PC-3 (cell line): ENCODE measurements at regions of chr17 and their contacts with region 1.

Region 1: GRCh38 chr17:79045842-79046196 is 21.9 kb downstream of the C1QTNF1 start:
- DNase-seq: peak; percentile 83
- ATAC-seq: peak; percentile 70
- H3K4me3 ChIP-seq: no peak overlapping the region
- H3K27ac ChIP-seq: no peak overlapping the region
- H3K4me1 ChIP-seq: peaks cover 5% of the 10 kb centered on the region; the same call in 1 of the 2 replicates
- H3K27me3 ChIP-seq: no peaks in the 10 kb centered on the region
- CTCF ChIP-seq: peak; percentile 97

Region 2: DNA sequence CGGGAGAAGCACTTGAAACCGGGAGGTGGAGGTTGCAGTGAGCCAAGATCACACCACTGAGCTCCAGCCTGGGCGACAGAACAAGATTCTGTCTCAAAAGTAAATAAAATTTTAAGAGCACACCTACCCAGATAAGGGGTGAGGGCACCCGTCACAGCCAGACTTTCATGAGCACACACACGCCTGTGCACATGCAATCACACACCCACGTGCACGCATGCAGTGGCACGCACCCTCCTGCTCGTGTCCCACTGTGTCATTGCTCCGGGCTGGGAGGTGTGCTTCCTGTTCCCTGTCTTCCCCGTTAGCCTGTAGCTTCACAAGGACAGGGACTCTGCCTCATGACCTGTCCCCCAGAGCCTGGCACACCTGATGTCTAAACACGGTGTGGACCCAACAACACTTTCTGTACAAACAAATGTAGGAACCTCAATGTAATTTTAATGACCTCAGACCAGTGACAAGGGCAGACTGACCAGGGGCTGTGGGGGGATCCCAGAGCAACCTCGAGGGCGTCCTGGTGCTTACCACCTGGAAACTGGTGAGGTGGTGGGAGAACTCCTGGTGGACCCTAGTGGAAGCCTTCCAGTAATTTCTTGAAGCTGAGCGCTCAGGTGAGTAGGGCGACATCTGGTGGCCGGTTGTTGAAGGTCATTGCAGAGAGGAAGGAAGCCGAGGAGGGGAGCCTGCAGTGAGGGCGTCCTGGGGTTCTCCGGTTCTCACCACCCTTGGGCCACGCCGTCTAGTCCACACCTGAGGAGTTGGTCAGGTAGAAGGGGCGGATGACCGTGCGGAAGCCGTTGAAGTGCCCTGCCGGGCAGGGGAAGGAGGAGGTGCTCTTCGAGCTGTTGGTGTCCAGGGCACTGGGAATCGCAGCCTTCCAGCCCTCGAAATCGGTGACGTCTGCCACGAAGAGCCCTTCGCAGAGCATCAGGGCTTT is 74.7 kb before region 1 on chr17:
- CTCF ChIA-PET with region 1: no interaction called
- POLR2A ChIA-PET with region 1: no interaction called
- intact Hi-C with region 1: no loop called
- DNase-seq: peak; percentile 91
- ATAC-seq: peak; percentile 61
- H3K4me3 ChIP-seq: no peak overlapping the region
- H3K27ac ChIP-seq: no peak overlapping the region
- H3K4me1 ChIP-seq: peaks cover 8% of the 10 kb centered on the region
- H3K27me3 ChIP-seq: no peaks in the 10 kb centered on the region
- CTCF ChIP-seq: peak; percentile 97

Region 3: DNA sequence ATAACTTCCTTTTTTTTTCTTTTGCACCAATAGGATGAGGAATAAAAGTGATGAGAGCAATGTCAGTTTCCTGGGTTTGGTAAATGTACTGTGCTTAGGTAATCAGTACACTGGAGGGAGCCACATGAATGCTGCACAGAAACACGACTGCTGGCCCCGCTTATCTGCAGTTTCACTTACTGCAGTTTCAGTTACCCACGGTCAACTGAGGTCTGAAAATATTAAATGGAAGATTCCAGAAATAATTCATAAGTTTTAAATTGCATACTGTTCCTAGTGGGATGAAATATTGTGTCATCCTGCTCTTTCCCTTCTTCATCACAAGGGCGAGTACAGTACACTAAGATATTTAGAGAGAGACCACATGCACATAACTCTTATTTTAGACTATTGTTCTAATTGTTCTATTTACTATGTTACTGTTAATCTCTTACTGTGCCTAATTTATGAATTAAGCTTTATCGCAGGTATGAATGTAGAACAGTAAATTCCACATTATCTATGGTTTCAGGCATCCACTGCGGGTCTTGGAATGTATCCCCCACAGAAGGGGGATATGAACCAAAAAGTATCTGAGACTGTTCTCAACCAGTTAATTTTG is 59.7 kb before region 1 on chr17:
- CTCF ChIA-PET with region 1: interaction called, 4 read pairs
- POLR2A ChIA-PET with region 1: no interaction called
- intact Hi-C with region 1: loop called (anchors 2 kb)
- DNase-seq: peak; percentile 42
- ATAC-seq: peak; percentile 32
- H3K4me3 ChIP-seq: peak overlapping the region; percentile 55
- H3K27ac ChIP-seq: peak overlapping the region; percentile 69
- H3K4me1 ChIP-seq: peaks cover 31% of the 10 kb centered on the region
- H3K27me3 ChIP-seq: no peaks in the 10 kb centered on the region
- CTCF ChIP-seq: peak; percentile 45

Region 4: DNA sequence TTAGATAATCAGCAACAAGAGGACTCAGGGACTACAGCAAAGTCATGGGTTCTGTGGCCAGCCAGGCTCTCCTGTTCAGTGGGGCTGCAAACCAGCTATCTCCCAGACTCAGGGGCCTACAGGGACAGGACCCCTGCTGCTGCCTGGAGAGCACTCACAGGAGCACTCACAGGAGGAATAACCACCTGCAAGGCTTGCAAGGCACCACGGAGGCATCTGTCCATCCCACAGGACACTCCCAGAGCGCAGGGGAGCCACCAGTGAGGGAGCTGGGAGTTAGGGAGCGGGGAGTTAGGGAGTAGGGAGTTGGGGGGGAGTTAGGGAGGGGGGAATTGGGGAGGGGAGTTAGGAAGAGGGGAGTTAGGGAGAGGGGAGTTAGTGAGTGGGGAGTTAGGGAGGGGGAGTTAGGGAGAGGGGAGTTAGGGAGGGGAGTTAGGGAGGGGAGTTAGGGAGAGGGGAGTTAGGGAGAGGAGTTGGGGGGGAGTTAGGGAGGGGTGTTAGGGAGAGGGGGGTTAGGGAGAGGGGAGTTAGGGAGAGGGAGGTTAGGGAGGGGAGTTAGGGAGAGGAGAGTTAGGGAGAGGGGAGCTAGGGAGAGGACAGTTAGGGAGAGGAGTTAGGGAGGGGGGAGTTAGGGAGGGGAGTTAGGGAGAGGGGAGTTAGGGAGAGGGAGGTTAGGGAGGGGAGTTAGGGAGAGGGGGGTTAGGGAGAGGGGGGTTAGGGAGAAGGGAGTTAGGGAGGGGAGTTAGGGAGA is 42.0 kb before region 1 on chr17:
- CTCF ChIA-PET with region 1: interaction called, 16 read pairs
- POLR2A ChIA-PET with region 1: no interaction called
- intact Hi-C with region 1: no loop called
- DNase-seq: no peak
- ATAC-seq: no peak
- H3K4me3 ChIP-seq: peak overlapping the region; percentile 42
- H3K27ac ChIP-seq: no peak overlapping the region
- H3K4me1 ChIP-seq: peaks cover 61% of the 10 kb centered on the region
- H3K27me3 ChIP-seq: no peaks in the 10 kb centered on the region
- CTCF ChIP-seq: no peak

Region 5: DNA sequence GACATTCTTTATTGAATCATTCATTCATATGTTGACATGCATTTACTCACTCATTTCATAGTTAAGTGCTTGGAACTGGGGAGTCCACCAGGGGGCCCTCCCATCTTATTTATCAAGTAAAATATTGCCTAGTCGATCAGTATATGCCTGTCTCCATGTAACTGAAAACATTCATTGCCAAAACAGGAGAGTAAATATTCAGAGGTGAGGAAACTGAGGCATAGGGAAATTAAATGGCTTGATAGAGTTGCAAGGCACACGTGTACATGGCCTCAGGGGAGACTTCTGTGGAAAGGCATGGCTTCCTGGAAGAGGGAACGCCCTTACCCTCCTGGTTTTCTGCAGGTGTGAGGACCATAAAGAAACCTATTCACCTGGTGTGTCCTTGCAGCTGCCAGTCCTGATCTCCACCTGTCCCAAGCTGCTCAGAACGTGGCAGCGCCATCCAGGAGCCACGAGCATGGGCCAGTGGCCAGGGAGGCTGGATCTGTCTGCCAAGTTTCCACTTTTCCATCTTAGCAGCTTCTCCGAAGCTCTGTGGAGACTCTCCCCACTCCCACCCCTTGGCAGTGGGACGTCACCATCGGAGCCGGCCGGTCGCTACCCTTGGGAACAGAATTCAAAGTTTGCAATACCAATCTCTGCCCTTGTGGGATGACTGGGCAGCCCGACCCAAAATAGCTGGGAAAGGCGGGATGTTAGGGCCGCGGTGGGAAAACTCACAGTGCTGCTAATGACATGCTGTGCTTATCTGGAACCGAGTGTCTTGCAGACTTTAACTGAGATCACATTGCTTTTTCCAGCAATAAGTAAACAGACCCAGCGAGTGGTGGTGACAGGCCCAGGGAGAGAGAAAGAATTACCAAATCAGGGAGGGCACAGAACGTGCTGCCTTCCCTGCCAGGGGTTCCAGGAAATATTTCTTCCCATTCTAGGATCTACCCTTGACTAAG is 25.9 kb before region 1 on chr17:
- CTCF ChIA-PET with region 1: interaction called, 22 read pairs
- POLR2A ChIA-PET with region 1: no interaction called
- intact Hi-C with region 1: loop called (anchors 1 kb)
- DNase-seq: peak; percentile 86
- ATAC-seq: peak; percentile 55
- H3K4me3 ChIP-seq: no peak overlapping the region
- H3K27ac ChIP-seq: no peak overlapping the region
- H3K4me1 ChIP-seq: peaks cover 22% of the 10 kb centered on the region
- H3K27me3 ChIP-seq: no peaks in the 10 kb centered on the region
- CTCF ChIP-seq: peak; percentile 99

Region 6: DNA sequence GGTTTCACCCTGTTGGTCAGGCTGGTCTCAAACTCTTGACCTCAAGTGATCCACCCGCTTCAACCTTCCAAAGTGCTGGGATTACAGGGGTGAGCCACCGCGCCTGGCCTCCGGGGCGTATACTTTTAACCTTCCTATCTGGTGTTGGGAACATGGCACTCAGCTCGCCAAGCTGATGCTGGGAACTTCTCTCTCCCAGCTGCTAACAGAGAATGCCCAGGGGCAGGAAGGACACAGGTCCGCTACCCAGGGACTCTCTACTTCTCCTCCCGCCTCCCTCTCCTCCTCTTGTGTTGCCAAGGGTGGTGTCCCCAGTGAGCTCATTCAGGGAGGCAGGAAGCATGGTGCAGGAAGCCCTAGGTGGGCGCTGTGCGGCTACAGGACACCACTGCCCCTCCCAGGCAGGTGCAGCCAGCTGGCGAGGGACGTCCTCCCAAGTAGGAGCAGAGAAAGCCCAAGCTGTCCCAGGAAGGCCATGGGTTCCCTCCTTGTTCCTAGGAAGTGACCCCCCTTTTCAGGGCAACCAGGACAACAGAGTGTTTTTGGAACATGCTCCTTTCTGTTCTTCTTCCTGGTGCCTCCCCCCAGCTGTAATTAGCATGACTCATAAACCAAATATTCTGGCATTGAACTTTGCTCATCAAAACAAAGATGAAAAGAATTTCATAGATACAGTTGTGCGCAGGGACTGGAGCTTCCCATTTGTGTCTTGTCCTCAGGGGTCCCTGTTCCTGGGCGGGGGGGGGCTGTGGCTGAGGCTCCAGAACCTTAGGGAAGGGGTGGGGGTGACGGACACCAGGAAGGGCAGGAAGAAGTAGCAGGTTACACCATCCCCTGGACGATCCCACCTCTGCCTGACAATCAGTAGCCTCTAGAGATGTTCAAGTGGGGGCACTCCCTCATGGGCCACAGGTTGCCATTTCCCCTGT is 19.2 kb before region 1 on chr17:
- CTCF ChIA-PET with region 1: interaction called, 22 read pairs
- POLR2A ChIA-PET with region 1: interaction called, 3 read pairs
- intact Hi-C with region 1: no loop called
- DNase-seq: peak; percentile 95
- ATAC-seq: peak; percentile 61
- H3K4me3 ChIP-seq: peak overlapping the region; percentile 56
- H3K27ac ChIP-seq: peak overlapping the region; percentile 85
- H3K4me1 ChIP-seq: peaks cover 45% of the 10 kb centered on the region
- H3K27me3 ChIP-seq: no peaks in the 10 kb centered on the region
- CTCF ChIP-seq: peak; percentile 34; the same call in 1 of the 2 replicates

Region 7: GRCh38 chr17:79082311-79083190 is 36.7 kb after region 1 on chr17:
- CTCF ChIA-PET with region 1: interaction called, 4 read pairs
- POLR2A ChIA-PET with region 1: no interaction called
- intact Hi-C with region 1: loop called (anchors 1 kb)
- DNase-seq: peak; percentile 73
- ATAC-seq: peak; percentile 66
- H3K4me3 ChIP-seq: no peak overlapping the region
- H3K27ac ChIP-seq: no peak overlapping the region
- H3K4me1 ChIP-seq: no peaks in the 10 kb centered on the region
- H3K27me3 ChIP-seq: no peaks in the 10 kb centered on the region
- CTCF ChIP-seq: peak; percentile 98

Region 8: DNA sequence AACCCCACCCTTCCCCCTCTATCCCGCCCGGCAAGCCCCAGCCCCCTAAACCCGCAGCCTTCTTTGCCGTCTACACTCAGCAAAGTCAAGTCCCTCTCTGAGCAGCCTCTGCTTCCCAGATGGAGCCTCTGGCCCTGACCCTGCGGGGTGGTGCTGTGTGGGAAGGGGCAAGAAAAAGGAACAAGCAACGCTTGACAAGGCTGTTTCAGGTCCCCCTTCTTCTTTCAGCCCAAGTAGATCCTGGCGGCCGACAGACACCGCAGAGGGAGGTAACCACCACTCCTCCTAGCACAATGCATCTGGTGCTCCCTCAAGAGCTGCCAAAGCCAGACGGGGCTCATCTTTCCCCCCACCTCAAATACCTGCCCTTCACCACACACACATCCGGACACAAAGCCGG is 207.1 kb after region 1 on chr17:
- CTCF ChIA-PET with region 1: no interaction called
- POLR2A ChIA-PET with region 1: no interaction called
- intact Hi-C with region 1: no loop called
- DNase-seq: no peak
- ATAC-seq: no peak
- H3K4me3 ChIP-seq: no peak overlapping the region
- H3K27ac ChIP-seq: no peak overlapping the region
- H3K4me1 ChIP-seq: no peaks in the 10 kb centered on the region
- H3K27me3 ChIP-seq: peaks cover 98% of the 10 kb centered on the region
- CTCF ChIP-seq: no peak